ENCODE measurements at regions of chr14 and their contacts with region 1.

Region 1: GRCh38 chr14:60184146-60184904 is 19.1 kb upstream of the DHRS7 start:
- DNase-seq: peak; percentile 22
- H3K4me3 Mint-ChIP-seq: peak overlapping the region; percentile 62
- H3K27ac Mint-ChIP-seq: peak overlapping the region; percentile 89
- H3K4me1 Mint-ChIP-seq: peaks cover 19% of the 10 kb centered on the region
- H3K27me3 Mint-ChIP-seq: no peaks in the 10 kb centered on the region

Region 2: DNA sequence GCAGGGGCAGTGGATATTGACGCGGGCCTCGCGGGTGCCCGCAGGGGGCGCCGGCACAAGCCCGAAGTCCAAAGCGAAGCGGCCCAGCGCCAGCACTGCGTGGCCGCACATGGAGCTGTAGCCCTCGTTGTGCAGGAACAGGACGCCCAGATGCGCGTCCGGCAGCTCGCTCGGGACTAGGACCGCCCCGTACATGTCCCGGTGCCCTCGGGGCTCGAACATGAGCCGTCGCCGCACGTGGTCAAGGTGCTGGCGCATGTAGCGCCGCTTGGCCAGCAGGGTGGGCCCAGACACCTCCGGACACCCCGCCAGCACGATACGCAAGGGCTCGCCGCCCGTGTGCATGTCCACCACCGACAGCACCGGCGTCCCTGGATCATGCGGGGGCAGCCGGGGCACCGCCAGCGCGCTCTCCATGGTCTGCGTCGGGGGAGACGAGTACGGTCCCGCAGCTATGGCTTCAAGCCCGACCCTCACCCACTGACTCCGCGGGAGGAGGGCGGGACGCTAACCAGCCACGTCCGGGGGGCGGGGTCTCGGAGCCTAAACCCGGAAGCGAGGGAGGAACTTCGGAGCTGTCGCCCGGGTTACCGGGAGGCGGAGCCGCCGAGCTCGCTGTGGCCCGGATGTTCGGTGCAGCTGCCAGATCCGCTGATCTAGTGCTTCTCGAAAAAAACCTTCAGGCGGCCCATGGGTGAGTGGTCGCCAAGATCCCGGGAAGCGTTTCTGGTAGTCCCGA is 700.3 kb before region 1 on chr14 and contains the starts of genes JKAMP and L3HYPDH:
- CTCF ChIA-PET with region 1: no interaction called
- intact Hi-C with region 1: loop called (anchors 5 kb)
- DNase-seq: peak; percentile 98
- H3K4me3 Mint-ChIP-seq: peak within 1 kb of the TSS; percentile 91
- H3K27ac Mint-ChIP-seq: peak within 1 kb of the TSS; percentile 83
- H3K4me1 Mint-ChIP-seq: peaks cover 49% of the 10 kb centered on the region
- H3K27me3 Mint-ChIP-seq: no peaks in the 10 kb centered on the region
- total RNA-seq, gene JKAMP: 15.2 to 15.6 TPM
- total RNA-seq, gene L3HYPDH: 7.0 to 7.6 TPM

Region 3: GRCh38 chr14:59632381-59632780 is 551.9 kb before region 1 on chr14:
- CTCF ChIA-PET with region 1: interaction called, 8 read pairs
- intact Hi-C with region 1: loop called (anchors 1 kb)
- DNase-seq: peak; percentile 39
- H3K4me3 Mint-ChIP-seq: no peak overlapping the region
- H3K27ac Mint-ChIP-seq: no peak overlapping the region
- H3K4me1 Mint-ChIP-seq: peaks cover 2% of the 10 kb centered on the region
- H3K27me3 Mint-ChIP-seq: peaks cover 44% of the 10 kb centered on the region

Region 4: GRCh38 chr14:59964251-59965007 is 219.9 kb before region 1 on chr14:
- CTCF ChIA-PET with region 1: interaction called, 156 read pairs
- intact Hi-C with region 1: loop called (anchors 1 kb)
- DNase-seq: no peak
- H3K4me3 Mint-ChIP-seq: peak overlapping the region; percentile 71
- H3K27ac Mint-ChIP-seq: peak overlapping the region; percentile 5
- H3K4me1 Mint-ChIP-seq: peaks cover 12% of the 10 kb centered on the region
- H3K27me3 Mint-ChIP-seq: no peaks in the 10 kb centered on the region

Region 5: DNA sequence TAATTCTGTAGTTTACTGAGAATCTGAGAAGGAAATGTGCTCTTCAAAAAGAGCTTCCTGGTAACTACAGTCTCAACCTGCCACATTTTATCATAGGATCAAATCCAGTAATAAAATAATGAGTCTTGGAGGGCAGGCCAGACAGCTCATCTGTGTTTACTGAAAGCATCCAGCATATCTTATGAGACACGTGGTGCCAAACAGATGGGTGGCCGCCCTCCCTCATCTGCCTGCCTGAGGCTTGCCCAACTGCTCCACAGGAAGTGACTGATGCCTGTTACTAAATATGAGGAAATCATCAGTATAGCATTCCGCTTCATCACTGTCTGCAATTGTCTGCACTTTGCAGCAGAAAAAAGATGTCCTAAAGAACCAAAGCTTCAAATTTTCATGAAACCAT is 32.6 kb before region 1 on chr14:
- CTCF ChIA-PET with region 1: interaction called, 7 read pairs
- intact Hi-C with region 1: loop called (anchors 1 kb)
- DNase-seq: peak; percentile 87
- H3K4me3 Mint-ChIP-seq: no peak overlapping the region
- H3K27ac Mint-ChIP-seq: peak overlapping the region; percentile 86
- H3K4me1 Mint-ChIP-seq: peaks cover 30% of the 10 kb centered on the region
- H3K27me3 Mint-ChIP-seq: no peaks in the 10 kb centered on the region

Region 6: DNA sequence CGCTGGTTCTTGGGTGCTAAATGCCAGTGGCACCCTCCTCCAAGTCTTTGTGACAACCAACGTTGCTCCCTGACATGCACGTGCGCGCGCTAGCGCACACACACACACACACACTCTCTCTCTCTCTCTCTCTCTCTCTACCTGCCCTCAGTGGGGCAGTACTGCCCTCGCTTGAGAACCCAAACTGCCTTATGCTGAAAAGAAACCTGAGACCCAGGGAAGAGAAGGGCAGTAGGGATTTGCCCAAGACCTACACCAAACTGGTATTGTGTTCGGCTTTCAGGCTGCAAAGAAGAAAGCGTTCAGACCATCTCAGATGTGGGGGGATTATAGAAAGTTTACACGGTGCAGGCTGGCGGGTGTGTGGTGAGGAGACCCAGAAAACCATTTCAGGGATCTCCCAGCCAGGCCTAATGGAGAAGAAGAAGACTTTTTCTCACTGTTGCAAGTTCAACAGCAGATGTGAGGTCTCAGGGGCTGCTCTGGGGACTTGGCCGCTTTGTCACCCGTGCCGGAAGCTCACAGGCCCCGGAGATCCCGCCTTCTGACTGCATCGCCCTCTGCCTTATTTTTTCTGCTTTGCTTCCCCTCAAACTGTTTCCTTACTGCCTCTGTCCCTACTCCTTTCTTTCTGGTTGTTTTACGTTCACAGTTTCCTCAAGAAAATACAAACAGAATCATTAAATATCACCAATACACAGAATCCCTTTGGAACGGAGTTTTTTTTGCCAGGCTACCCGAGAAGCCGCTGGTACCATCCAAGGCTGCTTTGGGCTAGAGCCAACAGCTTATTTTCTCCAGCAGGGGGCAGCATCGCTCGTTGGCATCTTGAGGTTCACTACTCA is 147.1 kb after region 1 on chr14:
- CTCF ChIA-PET with region 1: interaction called, 7 read pairs
- intact Hi-C with region 1: loop called (anchors 1 kb)
- DNase-seq: peak; percentile 91
- H3K4me3 Mint-ChIP-seq: peak overlapping the region; percentile 83
- H3K27ac Mint-ChIP-seq: peak overlapping the region; percentile 89
- H3K4me1 Mint-ChIP-seq: peaks cover 32% of the 10 kb centered on the region
- H3K27me3 Mint-ChIP-seq: peaks cover 17% of the 10 kb centered on the region

Measured in activated naive CD4-positive, alpha-beta T cell treated with anti-CD3 and anti-CD28 coated beads for 36 hours (primary cell).